ENCODE measurements at regions of chr1 and their contacts with region 1.

Region 1: GRCh38 chr1:9960706-9961562 is 17.7 kb downstream of the NMNAT1 start:
- DNase-seq: no peak
- H3K4me3 ChIP-seq: no peak overlapping the region
- H3K27ac ChIP-seq: no peak overlapping the region
- H3K4me1 ChIP-seq: no peaks in the 10 kb centered on the region
- H3K27me3 ChIP-seq: no peaks in the 10 kb centered on the region
- CTCF ChIP-seq: no peak
- POLR2A ChIP-seq: no peak

Region 2: DNA sequence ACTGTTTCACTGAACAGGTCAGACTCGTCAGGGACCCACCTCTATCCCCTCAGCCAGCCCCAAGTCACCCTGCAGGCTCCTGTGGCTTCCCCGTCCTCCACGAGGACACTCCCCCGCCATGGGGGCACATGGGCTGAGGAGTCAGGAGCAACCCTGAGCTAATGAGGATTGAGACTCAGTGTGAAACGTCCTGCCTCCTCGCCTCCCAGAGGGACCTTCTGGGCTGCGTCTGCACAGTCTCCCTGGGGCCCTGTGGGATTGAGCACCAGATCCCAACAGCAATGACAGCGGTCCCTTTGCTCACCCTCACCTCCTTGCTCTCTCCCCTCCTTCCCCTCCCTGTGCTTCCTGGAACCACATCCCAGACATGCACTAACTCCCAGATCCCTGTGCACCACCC is 440.5 kb before region 1 on chr1:
- intact Hi-C with region 1: no loop called
- DNase-seq: no peak
- H3K4me3 ChIP-seq: no peak overlapping the region
- H3K27ac ChIP-seq: no peak overlapping the region
- H3K4me1 ChIP-seq: no peaks in the 10 kb centered on the region
- H3K27me3 ChIP-seq: peaks cover 0 to 6% (median 0%) of the 10 kb centered on the region in 4 donors
- CTCF ChIP-seq: no peak
- POLR2A ChIP-seq: no peak

Region 3: DNA sequence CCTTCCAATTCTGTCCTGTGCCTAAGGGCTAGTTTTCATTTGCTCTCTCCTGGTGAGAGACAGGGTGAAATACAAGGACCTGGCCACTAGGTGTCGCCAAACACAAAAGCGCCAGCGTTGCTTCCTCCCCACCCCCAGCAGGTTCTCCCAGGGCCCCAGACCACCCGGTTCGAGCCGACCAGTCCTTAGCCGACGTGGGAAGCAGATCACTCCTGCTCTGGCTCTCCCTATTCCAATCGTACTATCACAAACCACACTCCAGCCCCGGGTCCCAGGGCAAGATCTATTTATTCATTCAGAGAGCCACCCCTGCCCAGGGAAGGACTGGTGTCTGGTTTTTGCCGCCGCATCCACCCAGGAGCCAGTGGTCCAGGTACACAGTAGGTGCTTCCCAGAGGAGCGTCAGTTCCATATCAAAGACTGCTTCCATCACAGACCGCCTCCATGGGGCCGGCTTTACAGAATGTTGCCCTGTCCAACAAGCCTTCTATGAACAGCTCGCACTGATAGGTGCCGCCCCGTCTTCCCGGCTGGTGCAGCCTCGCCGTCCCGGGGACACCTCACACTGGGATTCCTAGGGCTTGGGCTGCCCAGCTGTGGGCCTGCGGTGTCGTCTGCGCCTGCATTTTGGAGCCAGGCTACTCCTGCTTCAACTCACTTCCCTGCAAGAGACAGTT is 85.8 kb before region 1 on chr1:
- intact Hi-C with region 1: no loop called
- DNase-seq: no peak
- H3K4me3 ChIP-seq: peak overlapping the region in 3 of 4 donors; percentile 19 to 46 (median 24)
- H3K27ac ChIP-seq: peak overlapping the region; percentile 32 to 89 (median 64)
- H3K4me1 ChIP-seq: peaks cover 37 to 94% (median 46%) of the 10 kb centered on the region in 3 donors
- H3K27me3 ChIP-seq: no peaks in the 10 kb centered on the region
- CTCF ChIP-seq: peak; percentile 88 to 97 (median 96)
- POLR2A ChIP-seq: no peak

Region 4: DNA sequence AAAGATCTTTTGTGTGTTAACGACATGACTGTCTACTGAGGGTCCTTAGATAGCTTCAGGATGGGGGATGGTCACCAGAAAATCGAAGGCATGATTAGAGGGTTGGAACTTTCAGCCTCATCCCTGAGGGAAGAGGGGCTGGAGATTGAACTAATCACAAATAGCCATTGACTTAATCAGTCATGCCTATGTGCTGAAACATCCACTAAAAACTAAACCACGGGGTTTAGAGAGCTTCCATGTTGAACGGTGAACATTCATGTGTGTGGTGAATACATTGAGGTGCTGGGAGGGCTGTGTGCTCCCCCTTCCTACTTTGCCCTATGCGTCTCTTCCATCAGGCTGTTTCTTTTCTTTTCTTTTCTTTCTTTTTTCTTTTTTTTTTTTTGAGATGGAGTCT is 53.1 kb after region 1 on chr1:
- intact Hi-C with region 1: loop called (anchors 10 kb)
- DNase-seq: no peak
- H3K4me3 ChIP-seq: no peak overlapping the region
- H3K27ac ChIP-seq: no peak overlapping the region
- H3K4me1 ChIP-seq: no peaks in the 10 kb centered on the region
- H3K27me3 ChIP-seq: no peaks in the 10 kb centered on the region
- CTCF ChIP-seq: no peak
- POLR2A ChIP-seq: no peak

Region 5: GRCh38 chr1:10152709-10153284 is 191.9 kb after region 1 on chr1:
- intact Hi-C with region 1: loop called (anchors 10 kb)
- DNase-seq: no peak
- H3K4me3 ChIP-seq: no peak overlapping the region
- H3K27ac ChIP-seq: no peak overlapping the region
- H3K4me1 ChIP-seq: no peaks in the 10 kb centered on the region
- H3K27me3 ChIP-seq: no peaks in the 10 kb centered on the region
- CTCF ChIP-seq: peak in 5 of 6 experiments; percentile 42 to 78 (median 65)
- POLR2A ChIP-seq: no peak

Region 6: GRCh38 chr1:10975567-10976326 is 1014.8 kb after region 1 on chr1:
- intact Hi-C with region 1: no loop called
- DNase-seq: no peak
- H3K4me3 ChIP-seq: peak overlapping the region in 1 of 4 donors; percentile 5
- H3K27ac ChIP-seq: peak overlapping the region; percentile 57 to 79 (median 72)
- H3K4me1 ChIP-seq: peaks cover 26 to 61% (median 31%) of the 10 kb centered on the region in 3 donors
- H3K27me3 ChIP-seq: peaks cover 0 to 25% (median 0%) of the 10 kb centered on the region in 4 donors
- CTCF ChIP-seq: no peak
- POLR2A ChIP-seq: no peak